ENCODE measurements at regions of chr20 and their contacts with region 1.

Region 1: GRCh38 chr20:10673988-10674711 is at the start of gene JAG1:
- DNase-seq: peak; percentile 94
- H3K4me3 ChIP-seq: peak within 1 kb of the TSS; percentile 91 to 95 (median 94)
- H3K27ac ChIP-seq: peak within 1 kb of the TSS; percentile 92
- H3K4me1 ChIP-seq: peaks cover 31% of the 10 kb centered on the region
- H3K27me3 ChIP-seq: no peaks in the 10 kb centered on the region
- CTCF ChIP-seq: no peak
- POLR2A ChIP-seq: peak; percentile 47
- total RNA-seq, gene JAG1: 31.7 and 37.0 TPM in 2 replicates

Region 2: DNA sequence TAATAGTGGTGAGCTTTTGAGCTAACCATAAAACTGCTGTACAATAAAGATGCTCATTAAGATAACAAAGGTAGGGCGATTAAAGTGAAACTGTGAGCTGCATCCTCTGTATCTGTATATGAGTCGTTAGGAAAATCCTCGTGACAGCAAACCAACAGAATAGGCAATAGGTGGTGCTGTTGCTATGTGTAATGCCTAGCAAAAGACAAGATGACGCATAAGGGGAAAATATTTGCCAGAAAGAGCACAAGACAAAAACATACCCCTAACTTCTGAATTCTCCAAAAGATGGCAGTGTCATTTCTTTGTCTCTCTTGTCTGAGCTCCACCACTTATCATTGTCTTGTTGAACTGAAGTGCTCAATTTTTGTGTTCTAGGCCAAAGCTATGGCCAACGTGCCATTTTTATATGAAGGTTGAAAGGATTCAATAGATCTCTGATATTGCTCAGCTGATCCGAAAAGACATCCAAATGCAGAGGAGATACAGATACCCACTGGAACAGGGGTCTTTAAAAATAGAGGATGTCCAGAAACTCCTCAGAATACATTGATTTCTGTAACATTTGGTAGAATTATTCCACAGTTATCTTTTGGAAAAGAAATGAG is 695.6 kb before region 1 on chr20:
- CTCF ChIA-PET with region 1: interaction called, 3 read pairs
- POLR2A ChIA-PET with region 1: no interaction called
- dilution Hi-C with region 1: no loop called
- intact Hi-C with region 1: loop called (anchors 5 kb)
- DNase-seq: peak; percentile 87
- H3K4me3 ChIP-seq: no peak overlapping the region
- H3K27ac ChIP-seq: no peak overlapping the region
- H3K4me1 ChIP-seq: peaks cover 8% of the 10 kb centered on the region
- H3K27me3 ChIP-seq: peaks cover 1 to 6% of the 10 kb centered on the region in 2 experiments
- CTCF ChIP-seq: peak; percentile 65 to 68
- POLR2A ChIP-seq: no peak

Region 3: DNA sequence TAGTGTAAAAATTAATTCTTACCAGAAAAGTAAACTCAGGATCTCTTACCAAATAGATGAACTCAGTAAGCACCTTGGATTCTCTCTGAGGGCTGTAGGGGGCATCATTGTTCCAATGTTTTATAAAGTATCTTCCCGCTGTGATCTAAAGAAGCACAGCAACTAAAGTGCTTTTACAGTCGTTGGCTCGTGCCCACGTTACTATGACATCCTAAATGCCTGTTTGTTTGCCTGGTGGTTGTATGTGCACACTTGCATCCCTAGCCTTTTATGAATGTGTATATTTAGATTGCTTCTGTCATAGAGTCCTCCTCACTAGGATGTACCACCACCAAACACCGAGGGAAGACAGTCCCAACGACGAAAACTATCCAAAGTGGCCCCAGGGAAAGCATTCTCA is 204.6 kb before region 1 on chr20:
- CTCF ChIA-PET with region 1: interaction called, 5 read pairs
- POLR2A ChIA-PET with region 1: no interaction called
- dilution Hi-C with region 1: no loop called
- intact Hi-C with region 1: loop called (anchors 1 kb)
- DNase-seq: peak; percentile 90
- H3K4me3 ChIP-seq: no peak overlapping the region
- H3K27ac ChIP-seq: peak overlapping the region; percentile 9
- H3K4me1 ChIP-seq: peaks cover 40% of the 10 kb centered on the region
- H3K27me3 ChIP-seq: no peaks in the 10 kb centered on the region
- CTCF ChIP-seq: peak; percentile 49 to 50
- POLR2A ChIP-seq: no peak

Region 4: DNA sequence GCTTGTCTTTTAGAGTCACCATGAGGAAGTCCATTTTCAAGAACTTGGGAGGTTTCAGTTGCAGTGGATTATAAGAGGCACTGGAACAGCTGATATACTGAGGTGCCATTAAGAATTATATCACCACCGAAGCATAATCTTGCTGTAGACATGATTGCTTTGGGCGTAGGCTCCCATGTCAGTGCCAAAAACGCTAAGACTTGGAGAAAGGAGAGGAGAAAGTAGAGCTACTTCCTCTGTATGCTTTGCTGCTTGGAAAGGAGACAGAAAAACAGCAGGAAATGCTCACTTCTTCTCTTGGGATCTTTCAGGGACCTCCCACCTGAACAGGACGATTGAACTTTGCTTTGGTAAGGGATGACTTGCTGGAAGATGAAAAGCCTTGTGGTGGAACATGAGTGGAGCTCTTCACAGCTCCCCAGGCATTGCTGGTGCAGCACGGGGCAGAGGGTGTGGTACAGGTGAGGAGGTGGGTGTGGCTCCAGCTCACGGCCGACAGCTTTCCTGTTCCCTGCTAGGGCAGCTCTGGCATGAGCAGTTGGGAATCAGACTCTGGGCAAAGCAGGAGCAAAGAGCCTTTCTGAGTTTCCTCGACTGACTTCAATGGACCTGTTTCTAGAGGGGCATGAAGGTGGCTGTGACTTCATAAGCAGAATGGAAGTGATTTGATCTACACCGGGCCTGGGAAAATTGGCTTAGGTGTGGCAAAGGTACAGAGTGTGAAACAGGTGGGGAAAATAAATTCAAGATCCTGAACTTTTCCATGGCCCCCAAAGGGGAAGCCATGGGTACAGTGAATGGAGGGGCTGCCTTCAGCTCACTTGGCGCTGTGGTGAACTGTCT is 190.1 kb after region 1 on chr20:
- CTCF ChIA-PET with region 1: no interaction called
- POLR2A ChIA-PET with region 1: no interaction called
- dilution Hi-C with region 1: no loop called
- intact Hi-C with region 1: loop called (anchors 1 kb)
- DNase-seq: peak; percentile 48
- H3K4me3 ChIP-seq: no peak overlapping the region
- H3K27ac ChIP-seq: peak overlapping the region; percentile 59
- H3K4me1 ChIP-seq: peaks cover 32% of the 10 kb centered on the region
- H3K27me3 ChIP-seq: no peaks in the 10 kb centered on the region
- CTCF ChIP-seq: no peak
- POLR2A ChIP-seq: no peak

Region 5: GRCh38 chr20:11080781-11081377 is 406.7 kb after region 1 on chr20:
- CTCF ChIA-PET with region 1: no interaction called
- POLR2A ChIA-PET with region 1: no interaction called
- dilution Hi-C with region 1: no loop called
- intact Hi-C with region 1: loop called (anchors 2 kb)
- DNase-seq: peak; percentile 93
- H3K4me3 ChIP-seq: no peak overlapping the region
- H3K27ac ChIP-seq: peak overlapping the region; percentile 65
- H3K4me1 ChIP-seq: peaks cover 16% of the 10 kb centered on the region
- H3K27me3 ChIP-seq: no peaks in the 10 kb centered on the region
- CTCF ChIP-seq: no peak
- POLR2A ChIP-seq: no peak

Region 6: GRCh38 chr20:11267131-11267761 is 593.1 kb after region 1 on chr20:
- CTCF ChIA-PET with region 1: interaction called, 14 read pairs
- POLR2A ChIA-PET with region 1: interaction called, 5 read pairs
- dilution Hi-C with region 1: no loop called
- intact Hi-C with region 1: loop called (anchors 1 kb)
- DNase-seq: peak; percentile 94
- H3K4me3 ChIP-seq: no peak overlapping the region
- H3K27ac ChIP-seq: peak overlapping the region; percentile 56
- H3K4me1 ChIP-seq: peaks cover 23% of the 10 kb centered on the region
- H3K27me3 ChIP-seq: no peaks in the 10 kb centered on the region
- CTCF ChIP-seq: peak in 1 of 2 donors; percentile 13
- POLR2A ChIP-seq: no peak

Measured in endothelial cell of umbilical vein (primary cell).